A549 (cell line): ENCODE measurements at regions of chr9 and their contacts with region 1.

Region 1: GRCh38 chr9:91089405-91090129 is 272.2 kb downstream of the AUH start:
- DNase-seq: peak in 1 of 2 experiments; percentile 59
- ATAC-seq: peak; percentile 89 to 91
- H3K4me3 ChIP-seq: no peak overlapping the region
- H3K27ac ChIP-seq: peak overlapping the region in 1 of 2 experiments; percentile 51; a peak in 1 of 6 replicates
- H3K4me1 ChIP-seq: 0 out of 3 replicates have a peak, but pooled peaks cover 7% of the 10 kb centered on the region
- CTCF ChIP-seq: peak; percentile 59
- EP300 ChIP-seq: no peak
- POLR2A ChIP-seq: no peak
- RAD21 ChIP-seq: peak; percentile 76 to 80

Region 2: DNA sequence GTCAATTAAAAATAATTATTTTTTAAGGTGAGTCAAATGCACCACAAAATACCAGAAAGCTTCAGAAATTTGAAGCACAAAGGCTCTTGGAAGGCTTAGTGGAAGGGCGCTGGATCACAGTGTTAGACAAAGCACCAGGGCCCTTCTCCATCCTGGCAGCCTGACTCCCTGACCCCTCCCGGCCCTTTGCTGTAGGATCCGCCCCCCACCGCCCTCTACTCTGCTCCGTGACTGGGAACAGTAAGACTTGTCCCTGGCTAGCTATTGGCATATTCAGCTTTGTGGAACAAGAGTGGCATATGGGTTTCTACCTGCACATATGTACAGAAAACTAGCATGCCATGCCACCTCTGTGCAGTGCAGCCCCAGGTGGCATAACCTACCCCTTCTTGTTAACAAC is 65.8 kb before region 1 on chr9:
- CTCF ChIA-PET with region 1: no interaction called
- POLR2A ChIA-PET with region 1: no interaction called
- DNase-seq: no peak
- ATAC-seq: no peak
- H3K4me3 ChIP-seq: no peak overlapping the region
- H3K27ac ChIP-seq: no peak overlapping the region
- H3K4me1 ChIP-seq: no peaks in the 10 kb centered on the region
- CTCF ChIP-seq: no peak
- EP300 ChIP-seq: no peak
- POLR2A ChIP-seq: no peak
- RAD21 ChIP-seq: no peak

Region 3: DNA sequence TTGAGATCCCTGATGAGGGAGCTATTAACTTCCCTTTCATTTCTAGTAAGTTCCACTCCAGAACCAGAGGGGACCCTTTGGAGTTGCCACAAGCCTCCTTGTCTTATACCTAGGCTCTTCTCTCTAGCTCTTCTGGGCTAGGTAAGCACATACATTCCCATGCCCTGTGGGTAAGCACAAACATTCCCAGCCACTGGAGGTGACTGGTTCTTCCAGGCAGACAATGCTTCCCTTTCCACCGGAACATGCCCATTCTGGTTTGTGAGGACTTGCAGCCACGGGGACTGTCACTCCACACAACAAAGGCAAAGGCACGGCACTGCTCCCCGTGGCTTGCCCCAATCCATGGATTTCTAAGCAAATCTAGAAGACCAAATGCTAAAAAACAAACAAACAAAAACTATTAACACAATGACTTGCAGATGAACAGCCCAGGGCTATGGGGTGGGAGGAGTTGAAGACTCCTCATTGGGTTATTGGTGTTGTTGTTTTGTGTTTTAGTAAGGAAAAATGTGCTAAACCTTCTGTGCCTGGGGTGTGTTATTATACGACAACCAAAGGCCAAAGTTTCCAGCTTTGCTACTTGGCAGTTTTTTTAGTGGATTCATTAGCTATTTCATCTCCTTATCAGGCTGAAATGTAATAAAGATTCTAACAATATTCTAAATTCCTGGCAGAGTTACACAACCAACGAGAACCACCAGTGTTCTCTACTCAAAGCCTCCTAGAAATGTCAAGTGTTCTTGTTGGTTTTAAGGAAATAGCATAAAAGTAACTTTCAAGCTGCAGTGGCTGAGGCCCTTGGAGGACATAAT is 11.7 kb before region 1 on chr9:
- CTCF ChIA-PET with region 1: interaction called, 14 read pairs
- POLR2A ChIA-PET with region 1: no interaction called
- DNase-seq: no peak
- ATAC-seq: no peak
- H3K4me3 ChIP-seq: no peak overlapping the region
- H3K27ac ChIP-seq: no peak overlapping the region
- H3K4me1 ChIP-seq: no peaks in the 10 kb centered on the region
- CTCF ChIP-seq: no peak
- EP300 ChIP-seq: no peak
- POLR2A ChIP-seq: no peak
- RAD21 ChIP-seq: no peak

Region 4: GRCh38 chr9:91100878-91101450 is 11.4 kb after region 1 on chr9:
- CTCF ChIA-PET with region 1: interaction called, 11 read pairs
- POLR2A ChIA-PET with region 1: no interaction called
- DNase-seq: no peak
- ATAC-seq: no peak
- H3K4me3 ChIP-seq: no peak overlapping the region
- H3K27ac ChIP-seq: peak overlapping the region; percentile 30 to 68; a peak in 3 of 6 replicates
- H3K4me1 ChIP-seq: peaks cover 18% of the 10 kb centered on the region
- CTCF ChIP-seq: no peak
- EP300 ChIP-seq: no peak
- POLR2A ChIP-seq: no peak
- RAD21 ChIP-seq: no peak

Region 5: GRCh38 chr9:91119142-91119541 is 29.6 kb after region 1 on chr9:
- CTCF ChIA-PET with region 1: no interaction called
- POLR2A ChIA-PET with region 1: no interaction called
- DNase-seq: no peak
- ATAC-seq: no peak
- H3K4me3 ChIP-seq: no peak overlapping the region
- H3K27ac ChIP-seq: no peak overlapping the region
- H3K4me1 ChIP-seq: peaks cover 14% of the 10 kb centered on the region
- CTCF ChIP-seq: no peak
- EP300 ChIP-seq: no peak
- POLR2A ChIP-seq: no peak
- RAD21 ChIP-seq: no peak

Region 6: GRCh38 chr9:91676046-91676445 is 586.5 kb after region 1 on chr9:
- CTCF ChIA-PET with region 1: interaction called, 10 read pairs
- POLR2A ChIA-PET with region 1: no interaction called
- DNase-seq: peak in 1 of 2 experiments; percentile 60
- ATAC-seq: peak; percentile 90 to 92
- H3K4me3 ChIP-seq: no peak overlapping the region
- H3K27ac ChIP-seq: no peak overlapping the region
- H3K4me1 ChIP-seq: no peaks in the 10 kb centered on the region
- CTCF ChIP-seq: peak; percentile 58
- EP300 ChIP-seq: no peak
- POLR2A ChIP-seq: no peak
- RAD21 ChIP-seq: peak; percentile 76 to 78